Tibial artery (tissue), 4 donors: ENCODE measurements at regions of chr4 and their contacts with region 1.

Region 1: GRCh38 chr4:163484906-163485305 is 9.6 kb upstream of the TMA16 start:
- DNase-seq: peak in 1 of 2 donors; percentile 46
- H3K4me3 ChIP-seq: no peak overlapping the region
- H3K27ac ChIP-seq: no peak overlapping the region
- H3K4me1 ChIP-seq: no peaks in the 10 kb centered on the region
- H3K27me3 ChIP-seq: no peaks in the 10 kb centered on the region
- CTCF ChIP-seq: peak; percentile 31 to 48

Region 2: GRCh38 chr4:163148466-163149336 is 336.2 kb before region 1 on chr4:
- intact Hi-C with region 1: no loop called
- DNase-seq: no peak
- H3K4me3 ChIP-seq: no peak overlapping the region
- H3K27ac ChIP-seq: no peak overlapping the region
- H3K4me1 ChIP-seq: peaks cover 0 to 24% (median 10%) of the 10 kb centered on the region in 4 donors
- H3K27me3 ChIP-seq: no peaks in the 10 kb centered on the region
- CTCF ChIP-seq: no peak

Region 3: GRCh38 chr4:163448516-163449197 is 36.2 kb before region 1 on chr4:
- intact Hi-C with region 1: no loop called
- DNase-seq: no peak
- H3K4me3 ChIP-seq: no peak overlapping the region
- H3K27ac ChIP-seq: no peak overlapping the region
- H3K4me1 ChIP-seq: peaks cover 0 to 17% (median 2%) of the 10 kb centered on the region in 4 donors
- H3K27me3 ChIP-seq: no peaks in the 10 kb centered on the region
- CTCF ChIP-seq: no peak

Region 4: GRCh38 chr4:163544407-163545038 is 59.6 kb after region 1 on chr4:
- intact Hi-C with region 1: loop called (anchors 5 kb)
- DNase-seq: peak; percentile 39 to 71
- H3K4me3 ChIP-seq: peak overlapping the region; percentile 37 to 46
- H3K27ac ChIP-seq: peak overlapping the region; percentile 23
- H3K4me1 ChIP-seq: peaks cover 0 to 24% (median 3%) of the 10 kb centered on the region in 4 donors
- H3K27me3 ChIP-seq: no peaks in the 10 kb centered on the region
- CTCF ChIP-seq: peak; percentile 76 to 95

Region 5: GRCh38 chr4:164293203-164293602 is 808.3 kb after region 1 on chr4:
- intact Hi-C with region 1: no loop called
- DNase-seq: no peak
- H3K4me3 ChIP-seq: no peak overlapping the region
- H3K27ac ChIP-seq: no peak overlapping the region
- H3K4me1 ChIP-seq: no peaks in the 10 kb centered on the region
- H3K27me3 ChIP-seq: no peaks in the 10 kb centered on the region
- CTCF ChIP-seq: no peak